ENCODE measurements at regions of chr22 and their contacts with region 1.

Region 1: DNA sequence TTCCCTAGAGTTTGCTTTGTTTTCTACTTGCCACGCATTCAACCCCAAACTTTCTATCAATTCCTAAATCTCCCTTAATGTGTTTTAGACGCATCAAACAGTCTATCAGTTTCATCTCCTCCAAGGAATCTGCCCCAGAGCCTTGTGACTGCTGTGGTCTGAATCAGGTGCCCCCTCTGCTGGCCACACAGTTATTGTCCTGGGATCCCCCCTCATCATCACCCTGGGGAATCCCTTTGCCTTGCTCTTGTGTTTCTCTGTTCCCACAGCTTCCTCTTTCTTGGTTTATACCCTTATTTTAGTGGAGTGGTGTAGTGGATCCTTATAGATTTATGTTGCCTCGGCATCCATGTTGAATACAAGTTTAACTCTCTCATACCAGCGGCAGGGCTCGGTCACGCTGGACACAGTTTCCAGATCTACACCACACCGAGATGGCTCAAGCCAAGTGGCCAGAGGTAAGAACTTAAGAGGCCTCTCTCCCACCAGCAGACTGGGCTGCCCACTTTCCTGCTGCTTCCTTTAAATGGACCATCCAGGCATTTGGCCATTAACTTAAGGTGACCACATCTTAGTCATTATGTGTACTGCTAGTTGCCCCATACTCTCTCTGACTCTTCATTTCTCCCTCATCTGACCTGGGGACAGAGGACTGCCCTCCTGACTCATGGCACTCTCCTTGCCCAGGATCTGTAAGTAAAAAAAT is 8.2 kb downstream of the UPB1 start:
- DNase-seq: no peak
- ATAC-seq: peak; percentile 63

Region 2: GRCh38 chr22:24325105-24325757 is 178.1 kb before region 1 on chr22:
- intact Hi-C with region 1: loop called (anchors 1 kb)
- DNase-seq: no peak
- ATAC-seq: peak; percentile 73

Region 3: GRCh38 chr22:24423519-24424000 is 79.7 kb before region 1 on chr22:
- intact Hi-C with region 1: loop called (anchors 5 kb)
- DNase-seq: peak; percentile 90
- ATAC-seq: peak; percentile 65

Region 4: DNA sequence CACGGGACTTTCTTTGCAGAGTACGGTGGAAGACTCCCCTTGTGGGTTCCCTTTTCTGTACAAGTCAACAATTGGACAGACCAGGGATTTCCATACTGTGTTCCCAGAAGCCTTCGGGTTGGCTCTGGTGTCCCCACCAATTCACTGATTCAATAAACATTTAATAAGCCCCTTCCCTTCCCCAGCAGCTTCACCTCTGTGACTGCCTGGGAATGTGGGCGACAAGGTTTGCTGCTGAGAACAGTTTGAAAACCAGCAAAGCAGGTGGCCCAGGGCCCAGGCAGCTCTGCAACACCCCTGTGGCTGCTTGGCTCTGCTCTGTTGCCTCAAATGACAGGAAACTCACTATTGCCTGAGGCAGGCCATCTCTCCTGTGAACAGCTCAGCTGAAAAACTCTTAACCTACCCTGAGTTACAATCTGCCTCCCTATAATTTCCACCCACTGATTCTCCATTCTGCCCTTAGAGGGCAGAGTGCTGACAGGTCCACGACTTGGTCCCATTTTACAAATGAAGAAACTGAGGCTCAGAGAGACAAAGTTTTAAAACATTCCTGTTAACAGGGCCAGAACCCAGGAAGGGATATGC is 65.5 kb before region 1 on chr22:
- intact Hi-C with region 1: no loop called
- DNase-seq: no peak
- ATAC-seq: no peak

Measured in Right ventricle myocardium inferior (tissue), 1 donor.